Posterior vena cava (tissue), 2 donors: ENCODE measurements at regions of chr5 and their contacts with region 1.

Region 1: DNA sequence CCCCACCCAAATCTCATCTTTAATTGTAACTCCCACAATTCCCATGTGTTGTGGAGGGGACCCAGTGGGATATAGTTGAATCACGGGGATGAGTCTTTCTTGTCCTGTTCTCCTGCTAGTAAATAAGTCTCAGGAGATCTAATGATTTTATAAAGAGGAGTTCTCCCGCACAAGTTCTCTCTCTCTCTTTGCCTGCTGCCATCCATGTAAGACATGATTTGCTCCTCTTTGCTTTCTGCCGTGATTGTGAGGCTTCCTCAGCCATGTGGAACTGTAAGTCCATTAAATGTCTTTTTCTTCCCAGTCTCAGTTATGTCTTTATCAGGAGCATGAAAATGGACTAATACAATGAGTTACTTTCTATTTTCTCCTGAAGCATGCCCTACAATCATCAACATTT is 1158.5 kb downstream of the CDH18 start:
- DNase-seq: no peak

Region 2: DNA sequence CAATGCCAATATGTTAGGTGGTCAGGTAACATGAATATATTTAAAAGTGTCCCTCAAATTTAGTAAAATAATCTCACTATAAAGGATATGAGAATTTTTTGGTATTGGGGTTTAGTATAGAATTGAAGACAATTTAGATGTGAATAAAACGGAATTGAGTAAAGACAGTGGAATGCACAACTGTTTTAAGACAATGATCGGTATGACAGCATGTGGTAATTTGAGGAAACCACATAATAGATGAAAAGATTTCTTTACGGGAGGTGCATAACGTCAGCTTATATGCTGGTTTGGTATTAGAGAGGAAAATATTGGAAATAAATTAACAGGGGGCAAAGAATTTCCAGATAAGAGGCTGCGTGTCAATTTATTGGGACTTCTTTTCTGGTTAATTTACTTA is 115.2 kb after region 1 on chr5:
- intact Hi-C with region 1: no loop called
- DNase-seq: no peak

Region 3: DNA sequence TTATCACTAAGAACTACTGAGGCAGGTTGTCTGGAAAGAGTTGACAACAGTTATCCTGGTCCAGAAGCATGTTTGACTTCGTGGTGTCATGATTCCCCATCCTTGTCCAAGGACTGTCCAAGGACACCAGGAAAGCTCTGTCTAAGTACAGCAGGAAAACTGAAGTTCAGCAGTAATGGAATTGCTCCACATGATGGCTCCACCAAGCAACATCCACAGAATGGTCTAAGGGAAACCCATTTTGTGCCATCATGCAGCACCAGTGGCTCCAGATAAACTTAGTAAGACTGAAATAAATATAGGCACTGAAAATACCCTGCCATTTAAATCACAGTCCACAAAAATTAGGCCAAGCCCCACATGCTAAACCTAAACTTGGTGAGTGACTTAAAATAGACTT is 965.7 kb after region 1 on chr5:
- intact Hi-C with region 1: loop called in 1 of 2 experiments (anchors 5 kb)
- DNase-seq: no peak